OCI-LY7 (cell line): ENCODE measurements at regions of chr2 and their contacts with region 1.

Region 1: DNA sequence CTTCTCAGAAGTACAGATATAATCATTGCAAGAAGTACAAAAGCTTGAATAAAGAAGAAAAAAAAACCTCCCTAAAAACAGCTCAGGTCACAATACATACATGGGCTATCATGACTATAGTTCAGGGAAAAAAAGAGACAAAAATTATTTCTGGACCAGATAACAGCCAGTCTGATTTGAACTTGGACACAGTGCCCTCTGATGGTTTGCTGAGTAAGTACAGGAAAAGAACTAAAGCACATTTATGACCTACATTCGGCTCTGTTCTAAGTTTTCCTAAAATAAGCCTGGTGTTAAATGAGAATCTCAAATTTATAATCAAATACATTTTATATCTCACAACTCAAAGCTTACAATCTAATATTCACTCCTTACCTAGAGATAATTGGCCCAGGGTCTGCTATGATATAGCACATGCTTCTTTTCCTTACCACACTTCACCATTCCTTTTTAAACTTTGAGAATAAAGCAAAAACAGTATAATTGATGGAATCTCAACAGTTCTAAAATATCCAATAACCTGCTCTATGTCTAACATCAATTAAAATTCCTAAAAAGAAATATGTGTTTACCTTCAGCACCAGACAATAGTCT is 81.1 kb downstream of the RAPH1 start:
- DNase-seq: peak; percentile 71
- H3K4me3 ChIP-seq: no peak overlapping the region
- H3K27ac ChIP-seq: no peak overlapping the region
- H3K4me1 ChIP-seq: peaks cover 9% of the 10 kb centered on the region
- CTCF ChIP-seq: peak; percentile 96

Region 2: GRCh38 chr2:202574541-202574940 is 879.4 kb before region 1 on chr2:
- CTCF ChIA-PET with region 1: no interaction called
- POLR2A ChIA-PET with region 1: interaction called, 3 read pairs
- intact Hi-C with region 1: loop called (anchors 5 kb)
- DNase-seq: no peak
- H3K4me3 ChIP-seq: no peak overlapping the region
- H3K27ac ChIP-seq: no peak overlapping the region
- H3K4me1 ChIP-seq: no peaks in the 10 kb centered on the region
- CTCF ChIP-seq: no peak

Region 3: GRCh38 chr2:203225423-203226039 is 228.4 kb before region 1 on chr2:
- CTCF ChIA-PET with region 1: interaction called, 3 read pairs
- POLR2A ChIA-PET with region 1: no interaction called
- intact Hi-C with region 1: loop called (anchors 1 kb)
- DNase-seq: peak; percentile 45
- H3K4me3 ChIP-seq: no peak overlapping the region
- H3K27ac ChIP-seq: no peak overlapping the region
- H3K4me1 ChIP-seq: no peaks in the 10 kb centered on the region
- CTCF ChIP-seq: peak; percentile 85